Posterior vena cava (tissue), 2 donors: ENCODE measurements at regions of chr17 and their contacts with region 1.

Region 1: DNA sequence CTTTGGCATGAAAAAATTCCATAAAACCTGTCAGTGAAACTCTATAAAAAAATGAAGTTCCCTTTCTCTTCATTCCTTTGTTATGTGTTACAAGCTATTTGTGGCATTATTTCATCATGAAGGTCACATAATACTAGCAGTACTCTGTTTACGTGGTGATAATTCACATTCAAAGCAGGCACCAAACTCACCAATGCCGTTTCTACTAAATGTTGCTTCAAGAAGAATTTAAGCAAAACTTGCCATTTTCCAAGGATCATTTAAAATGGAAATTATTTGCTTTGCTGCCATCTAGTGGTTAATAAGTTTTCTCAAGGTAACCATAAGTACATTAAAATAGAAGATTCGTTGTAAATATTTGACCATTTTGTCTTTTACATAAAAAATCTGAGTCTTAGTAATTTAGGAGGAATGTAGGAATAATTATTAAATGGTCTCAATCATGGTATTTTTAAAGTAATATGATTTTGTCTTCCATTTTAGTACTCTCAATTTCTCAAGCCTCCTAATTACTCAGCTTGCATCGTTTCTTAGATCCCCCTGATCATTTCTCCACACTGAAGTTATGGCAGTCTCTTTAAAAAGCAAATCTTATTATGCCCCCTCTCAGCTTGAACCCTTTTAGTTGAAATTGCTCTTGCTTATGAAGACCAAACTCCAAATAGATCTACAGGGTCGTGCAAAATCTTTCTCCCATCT is 80.8 kb downstream of the OMG start:
- DNase-seq: no peak

Region 2: DNA sequence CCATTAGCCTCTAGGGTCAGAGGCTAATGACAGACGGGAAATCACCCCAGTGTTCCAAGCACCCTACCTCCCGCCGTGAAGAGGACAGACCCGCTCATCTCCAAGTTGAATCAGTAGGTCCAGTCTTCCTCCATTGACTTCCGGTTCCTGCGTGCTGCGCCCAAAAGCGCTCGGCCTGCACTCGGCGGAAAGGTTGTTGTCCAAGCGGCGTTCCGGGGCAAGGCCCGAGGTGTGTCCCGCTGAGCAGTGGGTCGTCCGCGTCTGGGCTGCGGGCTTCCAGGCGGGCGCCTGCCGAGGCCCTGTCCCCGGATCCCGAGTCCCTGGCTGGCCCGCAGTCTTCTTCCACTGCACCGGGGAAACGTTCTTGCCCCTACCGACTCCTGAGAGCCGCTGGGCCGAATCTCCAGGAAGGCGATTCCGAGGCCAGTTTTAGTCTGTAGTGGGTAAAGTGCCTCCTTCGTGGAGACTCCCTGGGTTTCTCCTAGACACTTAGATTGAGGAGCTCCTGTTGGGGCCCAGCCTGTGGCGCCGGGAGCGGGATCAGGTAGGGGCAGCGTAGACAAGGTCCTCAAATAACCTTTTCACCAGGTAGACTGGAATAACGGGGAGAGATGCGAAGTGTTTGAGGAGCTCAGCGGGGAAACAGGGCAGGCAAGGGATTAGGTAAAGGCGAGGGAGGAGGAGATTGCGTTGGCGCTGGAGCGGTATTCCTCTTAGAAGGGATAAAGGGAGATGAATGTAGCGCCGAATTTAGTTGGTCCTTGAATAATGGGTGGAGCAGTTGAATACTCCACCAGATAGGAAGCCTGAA is 309.9 kb before region 1 on chr17 and contains the start of gene TEFM:
- intact Hi-C with region 1: loop called in 1 of 2 experiments (anchors 10 kb)
- DNase-seq: peak; percentile 97
- total RNA-seq, gene TEFM: 15.1 to 15.8 TPM

Region 3: DNA sequence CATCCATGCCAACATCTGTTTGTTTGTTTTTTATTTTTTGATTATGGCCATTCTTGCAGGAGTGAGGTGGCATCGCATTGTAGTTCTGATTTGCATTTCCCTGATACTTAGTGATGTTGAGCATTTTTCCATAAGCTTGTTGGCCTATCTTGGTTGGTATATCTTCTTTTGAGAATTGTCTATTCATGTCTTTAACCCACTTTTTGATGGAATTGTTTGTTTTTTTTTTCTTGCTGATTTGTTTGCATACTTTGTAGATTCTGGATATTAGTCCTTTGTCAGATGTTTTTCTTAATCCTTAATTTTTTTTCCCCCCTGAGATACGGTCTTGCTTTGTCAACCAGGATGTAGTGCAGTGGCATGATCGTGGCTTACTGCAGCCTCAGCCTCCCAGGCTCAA is 202.4 kb before region 1 on chr17:
- intact Hi-C with region 1: loop called in 1 of 2 experiments (anchors 5 kb)
- DNase-seq: no peak

Region 4: GRCh38 chr17:31099016-31099415 is 117.2 kb before region 1 on chr17:
- intact Hi-C with region 1: no loop called
- DNase-seq: no peak